Heart right ventricle (tissue), 16 donors: ENCODE measurements at regions of chr18 and their contacts with region 1.

Region 1: DNA sequence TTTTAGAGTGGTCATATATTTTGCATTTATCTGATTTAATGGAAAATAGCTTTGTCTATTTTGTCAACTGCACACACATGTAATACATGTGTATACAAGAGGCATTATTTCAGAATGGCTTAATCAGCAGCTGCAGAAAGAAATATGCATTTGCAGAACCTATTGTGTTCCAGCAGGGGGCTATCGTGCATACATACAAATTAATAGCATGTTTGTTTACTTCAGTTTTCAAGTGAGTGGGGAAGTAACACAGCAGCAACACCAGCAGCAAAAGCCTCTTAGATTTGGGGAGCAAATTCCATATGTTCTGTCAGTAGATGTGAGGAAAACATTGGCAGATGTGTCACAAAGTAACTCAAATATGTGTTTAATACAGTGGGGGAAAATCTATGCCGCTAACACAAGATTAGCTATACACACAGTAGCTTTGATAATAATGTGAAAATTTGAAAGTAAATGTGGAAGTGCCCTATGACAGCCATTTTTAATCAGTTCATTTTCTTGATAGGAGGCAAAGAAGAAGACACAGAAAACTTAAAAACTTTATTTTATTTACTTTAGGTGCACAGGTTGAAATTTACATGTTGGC is 218.1 kb downstream of the WDR7 start:
- DNase-seq: peak in 1 of 2 donors; percentile 7
- ATAC-seq: peak in 4 of 8 donors; percentile 29 to 47 (median 34)
- H3K4me3 ChIP-seq: no peak overlapping the region
- H3K27ac ChIP-seq: no peak overlapping the region
- H3K4me1 ChIP-seq: peaks cover 0 to 6% (median 0%) of the 10 kb centered on the region in 9 donors
- H3K27me3 ChIP-seq: no peaks in the 10 kb centered on the region
- CTCF ChIP-seq: peak in 8 of 9 donors; percentile 43 to 77 (median 70)

Region 2: GRCh38 chr18:56756966-56757365 is 112.3 kb before region 1 on chr18:
- intact Hi-C with region 1: loop called in 1 of 10 experiments (anchors 10 kb)
- DNase-seq: peak in 1 of 2 donors; percentile 14
- ATAC-seq: peak in 7 of 8 donors; percentile 27 to 73 (median 33)
- H3K4me3 ChIP-seq: no peak overlapping the region
- H3K27ac ChIP-seq: no peak overlapping the region
- H3K4me1 ChIP-seq: peaks cover 0 to 12% (median 0%) of the 10 kb centered on the region in 9 donors
- H3K27me3 ChIP-seq: no peaks in the 10 kb centered on the region
- CTCF ChIP-seq: no peak

Region 3: GRCh38 chr18:57107140-57107832 is 238.0 kb after region 1 on chr18:
- intact Hi-C with region 1: loop called in 1 of 10 experiments (anchors 5 kb)
- DNase-seq: peak in 1 of 2 donors; percentile 6
- ATAC-seq: peak in 2 of 8 donors; percentile 54 to 56
- H3K4me3 ChIP-seq: no peak overlapping the region
- H3K27ac ChIP-seq: no peak overlapping the region
- H3K4me1 ChIP-seq: no peaks in the 10 kb centered on the region
- H3K27me3 ChIP-seq: peaks cover 0 to 13% (median 3%) of the 10 kb centered on the region in 7 donors
- CTCF ChIP-seq: no peak

Region 4: GRCh38 chr18:57434536-57435494 is 565.5 kb after region 1 on chr18 and contains the start of gene ONECUT2:
- intact Hi-C with region 1: loop called in 1 of 10 experiments (anchors 10 kb)
- DNase-seq: peak; percentile 90 to 91
- ATAC-seq: peak; percentile 97 to 99 (median 98)
- H3K4me3 ChIP-seq: peak within 1 kb of the TSS; percentile 40 to 58 (median 54)
- H3K27ac ChIP-seq: no peak within 1 kb of the TSS
- H3K4me1 ChIP-seq: peaks cover 12 to 58% (median 45%) of the 10 kb centered on the region in 9 donors
- H3K27me3 ChIP-seq: peaks cover 60 to 96% (median 94%) of the 10 kb centered on the region in 7 donors
- CTCF ChIP-seq: no peak
- total RNA-seq, gene ONECUT2: 0.05 to 0.53 (median 0.16) TPM in 8 of 10 donors, not detected in the others

Region 5: DNA sequence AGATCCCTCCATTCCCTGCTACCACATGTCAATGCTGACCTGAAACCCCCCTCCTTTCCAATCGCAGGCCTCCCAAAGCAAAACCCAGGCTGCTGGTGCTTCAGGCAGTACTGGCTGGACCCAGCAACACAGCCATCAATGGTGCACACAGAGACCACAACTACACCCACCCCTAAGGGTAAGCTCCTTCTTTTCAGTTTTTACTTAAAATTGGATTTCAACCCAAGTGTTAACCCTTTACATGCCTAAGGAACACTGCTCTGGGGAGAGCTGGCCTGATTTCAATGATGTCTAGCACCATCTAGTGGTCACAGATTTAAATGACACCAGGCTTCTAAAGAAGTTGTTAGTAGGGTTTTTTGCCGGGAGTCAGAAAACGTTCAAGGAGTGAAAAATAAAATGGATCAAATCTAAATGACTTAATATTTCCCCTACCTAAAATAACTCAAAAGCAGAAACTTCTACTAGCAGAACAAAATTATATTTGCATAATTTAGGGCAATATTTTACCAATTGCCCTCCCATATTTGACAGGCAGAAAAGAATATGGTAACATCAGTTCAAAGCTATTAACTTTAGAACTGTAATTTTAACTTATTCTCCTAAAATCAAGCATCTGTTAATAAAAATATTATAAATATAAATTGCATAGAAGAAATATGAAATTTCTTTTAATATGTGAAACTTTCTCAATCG is 692.6 kb after region 1 on chr18:
- intact Hi-C with region 1: loop called in 6 of 10 experiments (anchors 5 to 10 kb)
- DNase-seq: peak in 1 of 2 donors; percentile 21
- ATAC-seq: peak in 6 of 8 donors; percentile 35 to 50 (median 42)
- H3K4me3 ChIP-seq: no peak overlapping the region
- H3K27ac ChIP-seq: no peak overlapping the region
- H3K4me1 ChIP-seq: peaks cover 0 to 15% (median 0%) of the 10 kb centered on the region in 9 donors
- H3K27me3 ChIP-seq: no peaks in the 10 kb centered on the region
- CTCF ChIP-seq: peak; percentile 74 to 93 (median 86)